CD8-positive, alpha-beta T cell (primary cell): ENCODE measurements at regions of chr19 and their contacts with region 1.

Region 1: DNA sequence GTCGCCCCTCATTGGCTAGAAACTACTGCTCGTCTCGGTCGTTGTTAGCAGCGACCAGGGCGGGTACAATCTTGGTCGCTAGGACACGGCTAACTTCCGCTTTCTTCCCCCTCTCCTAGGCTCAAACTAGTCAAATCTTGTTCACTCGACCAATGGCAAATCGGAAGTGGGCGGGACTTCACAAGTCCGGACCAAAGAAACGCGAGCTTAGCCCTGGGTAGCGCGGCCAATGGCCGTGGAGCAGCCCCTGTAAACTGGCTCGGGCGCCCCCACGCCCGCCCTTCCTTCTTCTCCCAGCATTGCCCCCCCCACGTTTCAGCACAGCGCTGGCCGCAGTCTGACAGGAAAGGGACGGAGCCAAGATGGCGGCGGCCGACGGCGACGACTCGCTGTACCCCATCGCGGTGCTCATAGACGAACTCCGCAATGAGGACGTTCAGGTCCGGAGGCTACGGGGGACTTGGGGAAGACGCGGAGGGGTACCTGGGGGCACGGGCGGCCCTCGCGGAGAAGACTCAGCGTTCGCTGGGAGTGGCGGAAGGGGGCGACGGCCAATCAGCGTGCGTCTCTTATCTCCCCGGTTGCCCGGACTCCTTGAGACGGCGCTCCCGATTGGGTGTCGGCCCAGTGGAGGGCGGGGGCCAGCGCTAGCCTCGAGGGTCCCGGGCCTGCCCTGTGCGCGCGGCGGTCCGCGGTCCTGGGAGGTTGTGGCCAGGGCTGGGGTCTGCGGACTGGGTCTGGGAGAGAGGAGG is at the start of gene PPP2R1A:
- DNase-seq: peak; percentile 96 to 100 (median 98)
- ATAC-seq: peak; percentile 80
- H3K4me3 ChIP-seq: peak within 1 kb of the TSS; percentile 88 to 94
- H3K4me3 Mint-ChIP-seq: peak within 1 kb of the TSS; percentile 98
- H3K27ac ChIP-seq: peak within 1 kb of the TSS; percentile 97 to 98
- H3K27ac Mint-ChIP-seq: peak within 1 kb of the TSS; percentile 100
- H3K4me1 ChIP-seq: peaks cover 44% of the 10 kb centered on the region
- H3K4me1 Mint-ChIP-seq: peaks cover 48% of the 10 kb centered on the region
- H3K27me3 ChIP-seq: no peaks in the 10 kb centered on the region
- H3K27me3 Mint-ChIP-seq: no peaks in the 10 kb centered on the region
- CTCF ChIP-seq: no peak
- total RNA-seq, gene PPP2R1A: 186 to 188 TPM

Region 2: DNA sequence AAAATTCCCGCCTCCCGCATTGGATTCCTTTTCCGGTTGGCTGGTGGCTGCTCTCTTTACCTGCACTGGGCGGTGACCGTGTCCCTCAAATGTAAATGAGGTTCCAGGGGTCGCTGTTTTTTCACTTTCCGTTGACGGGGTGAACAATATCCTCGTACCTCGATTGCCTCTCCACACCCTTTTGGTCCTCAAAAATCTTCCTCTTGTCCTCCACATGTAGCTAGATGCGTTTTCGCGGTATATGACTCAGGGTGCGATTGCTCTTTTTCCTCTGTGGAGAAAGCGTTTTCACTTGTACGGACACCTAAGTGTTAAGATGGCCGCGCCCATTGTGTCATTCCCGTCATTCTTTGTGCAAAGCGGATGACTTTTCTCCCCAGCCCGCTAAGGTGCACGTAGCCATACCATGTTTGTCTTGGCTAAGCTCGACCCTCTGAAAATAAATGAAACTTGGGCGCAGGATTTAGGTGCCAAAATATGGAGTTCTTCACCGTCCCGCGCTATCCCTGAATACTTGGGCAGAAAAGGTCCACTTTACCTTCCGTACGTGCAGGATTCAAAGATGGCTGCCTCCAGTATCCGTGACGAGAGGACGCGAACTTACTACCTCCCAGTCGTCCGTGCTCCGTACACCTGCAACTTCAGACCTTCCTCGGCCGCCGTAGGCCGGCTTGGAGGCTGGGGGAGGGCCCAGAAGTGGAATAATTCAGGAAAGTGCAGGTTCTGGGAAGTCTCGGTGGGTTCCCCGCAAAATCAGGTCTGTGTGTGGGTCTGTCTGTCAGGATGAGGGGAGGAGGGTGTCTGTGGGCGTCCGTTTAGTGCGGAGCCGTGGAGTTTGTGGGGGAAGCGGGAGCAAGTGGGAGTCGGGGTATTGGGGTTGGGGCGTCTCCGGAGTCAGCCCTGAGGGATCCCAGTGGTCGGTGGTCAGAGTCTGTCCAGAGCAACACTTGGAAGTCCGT is 262.8 kb before region 1 on chr19 and contains the start of gene ZNF613:
- CTCF ChIA-PET with region 1: no interaction called
- POLR2A ChIA-PET with region 1: no interaction called
- intact Hi-C with region 1: loop called in 1 of 2 experiments (anchors 1 kb)
- DNase-seq: peak; percentile 63 to 92 (median 85)
- ATAC-seq: peak; percentile 86
- H3K4me3 ChIP-seq: peak within 1 kb of the TSS; percentile 88 to 95
- H3K4me3 Mint-ChIP-seq: peak within 1 kb of the TSS; percentile 95
- H3K27ac ChIP-seq: peak within 1 kb of the TSS; percentile 55 to 65
- H3K27ac Mint-ChIP-seq: peak within 1 kb of the TSS; percentile 91
- H3K4me1 ChIP-seq: peaks cover 7% of the 10 kb centered on the region
- H3K4me1 Mint-ChIP-seq: peaks cover 23% of the 10 kb centered on the region
- H3K27me3 ChIP-seq: no peaks in the 10 kb centered on the region
- H3K27me3 Mint-ChIP-seq: no peaks in the 10 kb centered on the region
- CTCF ChIP-seq: no peak
- total RNA-seq, gene ZNF613: 0.58 to 1.1 TPM

Region 3: DNA sequence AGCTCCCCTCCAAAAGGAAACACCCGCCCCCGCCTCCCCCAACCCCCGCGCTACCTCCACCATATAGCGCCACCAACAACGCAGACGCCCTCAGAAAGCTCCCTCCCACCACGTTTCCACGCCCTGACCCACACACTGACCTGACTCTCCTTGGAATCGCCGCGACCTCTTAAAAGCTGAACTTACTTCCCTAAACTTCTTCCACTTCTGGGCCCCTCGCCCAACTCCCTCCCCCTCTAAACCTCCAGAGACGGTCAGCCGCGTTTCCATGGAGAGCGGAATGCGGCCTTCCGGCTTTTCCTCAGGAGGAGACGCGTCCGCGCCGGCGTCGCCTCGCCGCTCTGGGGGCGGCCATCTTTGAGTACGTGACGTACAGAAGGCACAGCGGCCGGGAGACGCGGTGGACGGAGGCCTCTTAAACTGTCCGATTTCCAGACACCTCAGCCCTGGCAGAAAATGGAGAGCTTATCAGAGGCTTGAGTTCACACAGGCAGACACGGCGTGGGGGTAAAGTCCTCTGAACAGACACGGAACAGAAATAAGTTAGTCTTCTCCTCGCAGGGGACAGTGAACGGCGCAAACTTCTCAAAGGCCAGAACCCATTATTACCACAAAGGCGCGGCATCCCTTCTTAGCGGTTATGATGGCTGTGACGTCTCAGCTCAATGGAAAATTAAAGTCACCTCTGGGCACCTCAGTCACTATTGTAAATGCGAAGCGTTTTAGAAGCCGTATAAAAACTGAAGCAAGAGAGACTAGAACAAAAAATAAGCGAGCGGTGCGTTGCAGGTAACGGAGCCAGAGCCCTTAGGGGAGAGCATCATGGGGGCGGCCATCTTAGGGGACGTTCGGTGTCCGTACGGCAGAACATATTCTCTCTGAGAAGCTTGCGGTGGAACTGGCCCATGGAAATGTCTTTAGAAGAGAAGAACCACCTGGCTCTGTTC is 141.1 kb before region 1 on chr19 and contains the start of gene ZNF432:
- CTCF ChIA-PET with region 1: no interaction called
- POLR2A ChIA-PET with region 1: interaction called, 11 read pairs
- intact Hi-C with region 1: no loop called
- DNase-seq: peak; percentile 62 to 91 (median 84)
- ATAC-seq: peak; percentile 83
- H3K4me3 ChIP-seq: peak within 1 kb of the TSS; percentile 92 to 94
- H3K4me3 Mint-ChIP-seq: peak within 1 kb of the TSS; percentile 99
- H3K27ac ChIP-seq: peak within 1 kb of the TSS; percentile 95 to 97
- H3K27ac Mint-ChIP-seq: peak within 1 kb of the TSS; percentile 100
- H3K4me1 ChIP-seq: peaks cover 7% of the 10 kb centered on the region
- H3K4me1 Mint-ChIP-seq: peaks cover 29% of the 10 kb centered on the region
- H3K27me3 ChIP-seq: no peaks in the 10 kb centered on the region
- H3K27me3 Mint-ChIP-seq: no peaks in the 10 kb centered on the region
- CTCF ChIP-seq: no peak
- total RNA-seq, gene ZNF432: 16.0 to 18.4 TPM

Region 4: DNA sequence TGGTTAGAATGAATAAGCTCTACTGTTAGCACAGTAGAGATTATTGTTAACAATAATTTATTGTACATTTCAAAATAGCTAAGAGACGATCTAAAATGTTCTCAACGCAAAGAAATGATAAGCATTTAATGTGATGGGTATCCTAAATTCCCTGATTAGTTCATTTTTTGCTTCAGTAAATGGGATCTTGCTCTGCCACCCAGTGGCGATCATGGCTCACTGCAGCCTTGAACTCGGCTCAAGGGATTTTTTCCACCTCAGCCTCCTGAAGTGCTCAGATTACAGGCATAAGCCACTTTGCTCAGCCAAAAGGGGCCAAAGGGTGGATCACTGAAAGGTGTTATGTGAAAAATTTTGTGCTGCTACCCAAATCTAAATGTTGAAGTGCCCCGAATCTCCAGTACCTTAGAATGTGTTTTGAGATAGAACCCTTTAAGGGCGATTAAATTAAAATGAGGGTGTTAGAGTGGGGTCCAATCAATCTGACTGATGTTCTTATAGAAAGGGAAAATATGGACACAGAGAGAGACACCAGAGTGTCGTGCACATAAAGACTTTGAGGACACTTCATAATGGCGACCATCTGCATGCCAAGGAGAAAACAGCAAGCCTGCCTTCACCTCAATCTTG is 48.0 kb after region 1 on chr19:
- CTCF ChIA-PET with region 1: interaction called, 4 read pairs
- POLR2A ChIA-PET with region 1: no interaction called
- intact Hi-C with region 1: loop called in 1 of 2 experiments (anchors 5 kb)
- DNase-seq: peak; percentile 12 to 75 (median 53)
- ATAC-seq: peak; percentile 88
- H3K4me3 ChIP-seq: no peak overlapping the region
- H3K4me3 Mint-ChIP-seq: no peak overlapping the region
- H3K27ac ChIP-seq: no peak overlapping the region
- H3K27ac Mint-ChIP-seq: no peak overlapping the region
- H3K4me1 ChIP-seq: no peaks in the 10 kb centered on the region
- H3K4me1 Mint-ChIP-seq: no peaks in the 10 kb centered on the region
- H3K27me3 ChIP-seq: no peaks in the 10 kb centered on the region
- H3K27me3 Mint-ChIP-seq: no peaks in the 10 kb centered on the region
- CTCF ChIP-seq: peak; percentile 99

Region 5: DNA sequence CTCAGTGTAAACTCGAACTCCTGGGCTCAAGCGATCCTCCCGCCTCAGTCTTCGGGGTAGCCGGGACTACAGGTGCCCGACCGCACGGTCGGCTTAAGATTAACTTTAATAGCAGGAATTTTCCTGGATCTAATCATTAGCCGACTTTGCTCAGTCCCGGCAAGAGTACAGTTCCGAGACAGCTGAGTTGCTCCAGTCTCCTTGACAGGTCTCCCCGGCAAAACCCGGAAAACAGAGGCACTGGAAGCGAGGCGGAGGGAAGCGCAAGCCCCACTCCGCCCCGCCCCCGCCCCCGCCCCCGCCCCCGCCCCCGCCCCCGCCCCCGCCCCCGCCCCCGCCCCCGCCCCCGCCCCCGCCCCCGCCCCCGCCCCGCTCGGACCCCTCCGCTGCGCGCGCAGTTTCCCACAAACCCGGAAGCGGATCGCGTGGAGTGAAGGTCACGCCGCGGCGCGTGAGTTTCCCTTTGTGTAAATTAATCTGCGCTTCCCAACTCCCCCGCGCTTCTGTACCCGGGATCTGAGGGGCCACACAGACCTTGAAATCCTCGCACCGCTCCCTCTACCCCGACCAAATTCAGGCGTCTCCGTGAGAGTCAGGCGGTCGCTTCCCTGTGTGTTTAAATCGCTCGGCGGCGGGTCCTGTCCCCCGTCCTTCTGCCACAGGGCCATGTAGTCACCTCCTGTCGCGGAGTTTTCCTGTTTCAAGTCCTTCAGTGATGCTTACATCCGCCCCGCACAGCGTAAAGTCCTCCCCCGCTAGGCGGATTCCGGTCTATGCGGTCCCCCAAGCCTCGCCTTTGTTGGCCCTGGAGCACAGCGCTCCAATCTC is 107.1 kb after region 1 on chr19 and contains the start of gene ZNF480:
- CTCF ChIA-PET with region 1: no interaction called
- POLR2A ChIA-PET with region 1: no interaction called
- intact Hi-C with region 1: loop called in 1 of 2 experiments (anchors 5 kb)
- DNase-seq: peak; percentile 73 to 94 (median 89)
- ATAC-seq: peak; percentile 92
- H3K4me3 ChIP-seq: peak within 1 kb of the TSS; percentile 96 to 97
- H3K4me3 Mint-ChIP-seq: peak within 1 kb of the TSS; percentile 97
- H3K27ac ChIP-seq: peak within 1 kb of the TSS; percentile 93 to 98
- H3K27ac Mint-ChIP-seq: peak within 1 kb of the TSS; percentile 99
- H3K4me1 ChIP-seq: peaks cover 7% of the 10 kb centered on the region
- H3K4me1 Mint-ChIP-seq: peaks cover 20% of the 10 kb centered on the region
- H3K27me3 ChIP-seq: no peaks in the 10 kb centered on the region
- H3K27me3 Mint-ChIP-seq: no peaks in the 10 kb centered on the region
- CTCF ChIP-seq: no peak
- total RNA-seq, gene ZNF480: 7.8 to 9.1 TPM

Region 6: GRCh38 chr19:52897144-52897935 is 707.4 kb after region 1 on chr19 and contains the start of gene ZNF320:
- CTCF ChIA-PET with region 1: no interaction called
- POLR2A ChIA-PET with region 1: interaction called, 3 read pairs
- intact Hi-C with region 1: loop called in 1 of 2 experiments (anchors 1 kb)
- DNase-seq: peak; percentile 80 to 96 (median 90)
- ATAC-seq: peak; percentile 100
- H3K4me3 ChIP-seq: peak within 1 kb of the TSS; percentile 74 to 77
- H3K4me3 Mint-ChIP-seq: peak within 1 kb of the TSS; percentile 93
- H3K27ac ChIP-seq: peak within 1 kb of the TSS; percentile 75
- H3K27ac Mint-ChIP-seq: peak within 1 kb of the TSS; percentile 92
- H3K4me1 ChIP-seq: peaks cover 13% of the 10 kb centered on the region
- H3K4me1 Mint-ChIP-seq: peaks cover 27% of the 10 kb centered on the region
- H3K27me3 ChIP-seq: no peaks in the 10 kb centered on the region
- H3K27me3 Mint-ChIP-seq: no peaks in the 10 kb centered on the region
- CTCF ChIP-seq: no peak
- total RNA-seq, gene ZNF320: 5.5 to 9.5 TPM